ENCODE measurements at regions of chr17 and their contacts with region 1.

Region 1: DNA sequence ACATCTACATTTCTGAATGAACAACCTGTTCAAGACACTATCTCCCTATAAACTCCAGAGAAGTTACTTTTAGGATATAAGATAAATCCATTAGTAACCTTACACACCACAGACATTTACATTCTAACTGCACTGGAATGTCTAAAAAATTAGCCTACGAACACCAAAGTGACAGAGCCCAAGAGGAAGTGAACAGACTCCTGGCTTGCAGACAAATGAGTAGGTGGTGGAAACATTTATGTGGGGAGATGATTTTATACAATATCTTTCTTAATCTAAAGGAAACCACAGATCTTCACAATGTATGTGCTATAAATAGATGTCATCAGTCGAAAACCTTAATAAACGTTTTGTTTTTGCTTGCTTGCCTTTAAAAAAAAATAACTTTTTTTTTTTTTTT is 18.8 kb downstream of the ZNF652 start:
- DNase-seq: no peak
- H3K4me3 Mint-ChIP-seq: peak overlapping the region; percentile 72
- H3K27ac Mint-ChIP-seq: peak overlapping the region; percentile 83
- H3K4me1 Mint-ChIP-seq: peaks cover 62% of the 10 kb centered on the region
- H3K27me3 Mint-ChIP-seq: peaks cover 2% of the 10 kb centered on the region

Region 2: DNA sequence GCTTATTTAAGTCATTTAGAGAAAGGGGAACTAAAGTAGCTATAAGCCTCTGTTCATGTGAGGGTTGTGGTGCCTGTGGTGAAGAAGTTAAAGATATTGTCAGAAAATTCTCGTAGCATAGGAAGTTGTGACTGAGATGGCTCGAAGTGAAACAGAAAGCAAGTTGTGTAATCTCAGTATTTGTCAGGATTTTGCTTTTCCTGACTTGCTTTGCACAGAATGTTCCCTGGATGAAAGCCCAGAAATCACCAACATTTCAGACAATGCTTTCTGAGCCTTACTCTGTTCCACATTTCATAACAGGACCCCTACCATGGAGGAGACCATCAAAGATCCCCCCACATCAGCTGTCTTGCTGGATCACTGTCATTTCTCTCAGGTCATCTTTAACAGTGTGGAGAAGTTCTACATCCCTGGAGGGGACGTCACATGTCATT is 501.9 kb before region 1 on chr17:
- intact Hi-C with region 1: loop called (anchors 2 kb)
- DNase-seq: peak; percentile 54
- H3K4me3 Mint-ChIP-seq: peak overlapping the region; percentile 66
- H3K27ac Mint-ChIP-seq: peak overlapping the region; percentile 9
- H3K4me1 Mint-ChIP-seq: peaks cover 54% of the 10 kb centered on the region
- H3K27me3 Mint-ChIP-seq: peaks cover 2% of the 10 kb centered on the region

Region 3: DNA sequence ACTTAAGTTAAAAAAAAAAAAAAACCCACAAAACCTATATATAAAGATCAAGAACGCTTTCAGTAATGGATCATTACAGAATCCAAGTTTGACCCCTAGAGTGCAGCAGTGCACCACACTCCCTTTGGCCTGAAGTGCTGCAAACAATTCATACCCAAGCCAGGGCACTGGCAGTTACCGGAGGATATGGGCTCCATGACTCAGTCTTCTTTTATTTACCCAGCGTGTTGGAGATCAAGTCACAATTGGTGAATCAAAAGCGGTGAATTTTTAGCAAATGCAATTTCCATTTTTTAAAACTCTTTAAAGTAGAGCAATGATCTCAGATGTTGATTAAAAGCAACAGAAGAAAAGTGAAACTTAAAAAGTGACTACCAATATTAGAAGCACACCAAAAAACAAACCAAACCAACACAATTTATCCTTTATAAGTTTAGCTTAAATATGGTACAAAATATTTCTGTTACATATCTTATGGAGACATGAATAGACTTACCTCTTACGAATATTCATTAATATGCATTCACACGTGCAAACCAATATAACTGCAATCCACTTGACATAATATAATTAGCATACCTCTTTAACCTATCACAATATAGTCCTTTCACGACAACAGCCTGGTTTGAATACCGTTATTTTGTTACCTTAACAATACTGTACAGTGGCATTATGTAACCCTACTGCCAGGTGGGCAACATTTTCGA is 27.6 kb before region 1 on chr17:
- intact Hi-C with region 1: loop called (anchors 1 kb)
- DNase-seq: peak; percentile 63
- H3K4me3 Mint-ChIP-seq: peak overlapping the region; percentile 69
- H3K27ac Mint-ChIP-seq: peak overlapping the region; percentile 70
- H3K4me1 Mint-ChIP-seq: peaks cover 30% of the 10 kb centered on the region
- H3K27me3 Mint-ChIP-seq: no peaks in the 10 kb centered on the region

Region 4: DNA sequence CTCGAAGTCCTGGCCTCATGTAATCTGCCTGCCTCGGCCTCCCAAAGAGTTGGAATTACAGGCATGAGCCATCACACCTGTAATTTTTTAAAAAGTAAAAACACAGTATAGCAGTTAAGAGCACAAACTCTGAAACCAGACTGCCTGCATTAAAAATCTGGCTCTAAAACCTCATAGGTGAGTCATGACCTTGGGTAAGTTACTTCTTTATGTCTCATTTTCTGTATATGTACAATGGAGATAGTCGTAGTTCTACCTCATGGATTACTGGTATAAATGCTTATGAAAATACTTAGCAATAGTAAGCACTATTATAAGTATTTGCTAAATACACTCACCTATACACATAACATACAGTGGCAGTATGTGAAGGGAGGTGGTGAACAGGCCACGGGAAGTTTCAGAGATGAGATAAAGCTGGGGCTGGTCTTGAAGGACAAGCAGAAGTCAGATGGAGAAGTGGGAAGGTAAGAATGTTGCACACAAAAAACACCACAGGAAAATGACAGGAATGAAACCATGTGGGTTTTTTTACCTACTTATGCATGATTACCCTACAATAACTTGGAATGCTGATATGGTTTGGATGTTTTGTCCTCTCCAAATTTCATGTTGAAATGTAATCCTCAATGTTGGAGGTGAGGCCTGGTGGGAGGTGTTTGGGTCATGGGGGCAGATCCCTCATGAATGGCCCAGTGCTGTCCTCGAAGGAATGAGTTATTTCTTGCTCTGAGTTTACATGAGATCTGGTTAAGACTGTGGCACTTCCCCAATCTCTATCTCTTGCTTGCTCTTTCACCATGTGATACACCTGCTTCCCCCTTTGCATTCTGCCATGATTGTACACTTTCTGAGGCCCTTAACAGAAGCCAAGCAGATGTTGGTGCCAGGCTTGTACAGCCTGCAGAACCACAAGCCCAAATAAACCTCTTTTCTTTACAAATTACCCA is 15.2 kb before region 1 on chr17:
- intact Hi-C with region 1: loop called (anchors 1 kb)
- DNase-seq: no peak
- H3K4me3 Mint-ChIP-seq: no peak overlapping the region
- H3K27ac Mint-ChIP-seq: peak overlapping the region; percentile 16
- H3K4me1 Mint-ChIP-seq: peaks cover 44% of the 10 kb centered on the region
- H3K27me3 Mint-ChIP-seq: no peaks in the 10 kb centered on the region

Region 5: GRCh38 chr17:49361902-49362722 is 18.8 kb after region 1 on chr17 and contains the start of gene ZNF652:
- intact Hi-C with region 1: loop called (anchors 1 kb)
- DNase-seq: peak; percentile 94
- H3K4me3 Mint-ChIP-seq: peak within 1 kb of the TSS; percentile 88
- H3K27ac Mint-ChIP-seq: peak within 1 kb of the TSS; percentile 89
- H3K4me1 Mint-ChIP-seq: peaks cover 62% of the 10 kb centered on the region
- H3K27me3 Mint-ChIP-seq: no peaks in the 10 kb centered on the region
- total RNA-seq, gene ZNF652: 6.3 and 7.5 TPM in 2 replicates

Region 6: GRCh38 chr17:49414622-49415350 is 71.5 kb after region 1 on chr17 and contains the start of gene PHB1:
- intact Hi-C with region 1: loop called (anchors 2 kb)
- DNase-seq: peak; percentile 93
- H3K4me3 Mint-ChIP-seq: peak within 1 kb of the TSS; percentile 98
- H3K27ac Mint-ChIP-seq: peak within 1 kb of the TSS; percentile 95
- H3K4me1 Mint-ChIP-seq: peaks cover 9% of the 10 kb centered on the region
- H3K27me3 Mint-ChIP-seq: peaks cover 3% of the 10 kb centered on the region
- total RNA-seq, gene PHB1: 395 and 401 TPM in 2 replicates

Measured in activated T-helper 1 cell treated with anti-CD3 and anti-CD28 coated beads, Interleukin-12 subunit alpha, Interleukin-12 subunit beta, Interleukin-2, Interleukin-4 antibody, amounts not matched to agents 30 ng/mL and 10 ng/mL and 1 ng/mL, durations not matched to agents 14 hours and 24 hours and 36 hours (primary cell).